Natural killer cell (primary cell): ENCODE measurements at regions of chr2 and their contacts with region 1.

Region 1: DNA sequence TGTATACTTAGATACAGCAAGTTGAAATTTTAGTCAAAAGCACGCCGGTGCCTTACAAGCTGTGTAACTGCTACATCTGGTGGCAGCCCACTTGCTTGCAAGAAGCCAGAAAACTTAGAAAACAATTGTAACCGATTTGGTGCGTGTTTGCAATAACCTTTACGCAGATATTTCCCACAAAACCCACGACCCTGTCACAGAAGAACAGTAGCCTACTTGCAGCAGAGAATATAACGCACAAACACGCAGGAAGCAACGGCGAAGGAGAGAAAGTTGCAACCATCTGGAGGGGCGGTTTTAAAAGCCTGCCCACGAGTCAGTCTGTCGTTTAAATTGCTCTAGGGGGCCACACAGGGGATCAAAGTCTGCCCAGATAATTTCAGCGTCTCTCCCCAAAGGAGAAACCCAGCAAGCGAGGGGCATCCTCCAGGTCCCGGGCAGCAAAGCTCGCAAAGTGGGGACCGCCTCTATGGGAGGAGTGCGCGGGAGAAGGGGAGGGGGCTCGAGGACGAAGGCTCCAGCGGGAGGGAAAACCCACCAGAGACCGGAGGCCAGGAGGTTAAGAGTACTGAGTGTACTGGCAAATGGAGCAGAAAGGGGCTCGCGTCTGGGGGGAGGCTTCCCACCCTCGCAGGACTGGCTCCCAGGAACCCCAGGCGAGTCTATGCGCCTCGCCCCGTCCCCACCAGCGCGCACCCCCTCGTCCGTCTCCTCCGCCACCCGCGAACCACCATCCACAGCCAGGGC is 1.1 kb downstream of the TLK1 start:
- DNase-seq: peak; percentile 47 to 86
- ATAC-seq: peak; percentile 28 to 46 (median 33)
- H3K4me3 ChIP-seq: peak overlapping the region; percentile 74
- H3K4me3 Mint-ChIP-seq: peak overlapping the region; percentile 98
- H3K27ac ChIP-seq: peak overlapping the region; percentile 90
- H3K27ac Mint-ChIP-seq: peak overlapping the region; percentile 87 to 96
- H3K4me1 ChIP-seq: peaks cover 3% of the 10 kb centered on the region
- H3K4me1 Mint-ChIP-seq: peaks cover 48 to 50% of the 10 kb centered on the region in 2 donors
- H3K27me3 ChIP-seq: no peaks in the 10 kb centered on the region
- H3K27me3 Mint-ChIP-seq: no peaks in the 10 kb centered on the region
- CTCF ChIP-seq: peak; percentile 50

Region 2: GRCh38 chr2:171136024-171136423 is 23.5 kb before region 1 on chr2:
- intact Hi-C with region 1: no loop called
- DNase-seq: no peak
- ATAC-seq: no peak
- H3K4me3 ChIP-seq: no peak overlapping the region
- H3K4me3 Mint-ChIP-seq: no peak overlapping the region
- H3K27ac ChIP-seq: no peak overlapping the region
- H3K27ac Mint-ChIP-seq: peak overlapping the region; percentile 10 to 19
- H3K4me1 ChIP-seq: no peaks in the 10 kb centered on the region
- H3K4me1 Mint-ChIP-seq: peaks cover 52 to 58% of the 10 kb centered on the region in 2 donors
- H3K27me3 ChIP-seq: no peaks in the 10 kb centered on the region
- H3K27me3 Mint-ChIP-seq: no peaks in the 10 kb centered on the region
- CTCF ChIP-seq: no peak

Region 3: DNA sequence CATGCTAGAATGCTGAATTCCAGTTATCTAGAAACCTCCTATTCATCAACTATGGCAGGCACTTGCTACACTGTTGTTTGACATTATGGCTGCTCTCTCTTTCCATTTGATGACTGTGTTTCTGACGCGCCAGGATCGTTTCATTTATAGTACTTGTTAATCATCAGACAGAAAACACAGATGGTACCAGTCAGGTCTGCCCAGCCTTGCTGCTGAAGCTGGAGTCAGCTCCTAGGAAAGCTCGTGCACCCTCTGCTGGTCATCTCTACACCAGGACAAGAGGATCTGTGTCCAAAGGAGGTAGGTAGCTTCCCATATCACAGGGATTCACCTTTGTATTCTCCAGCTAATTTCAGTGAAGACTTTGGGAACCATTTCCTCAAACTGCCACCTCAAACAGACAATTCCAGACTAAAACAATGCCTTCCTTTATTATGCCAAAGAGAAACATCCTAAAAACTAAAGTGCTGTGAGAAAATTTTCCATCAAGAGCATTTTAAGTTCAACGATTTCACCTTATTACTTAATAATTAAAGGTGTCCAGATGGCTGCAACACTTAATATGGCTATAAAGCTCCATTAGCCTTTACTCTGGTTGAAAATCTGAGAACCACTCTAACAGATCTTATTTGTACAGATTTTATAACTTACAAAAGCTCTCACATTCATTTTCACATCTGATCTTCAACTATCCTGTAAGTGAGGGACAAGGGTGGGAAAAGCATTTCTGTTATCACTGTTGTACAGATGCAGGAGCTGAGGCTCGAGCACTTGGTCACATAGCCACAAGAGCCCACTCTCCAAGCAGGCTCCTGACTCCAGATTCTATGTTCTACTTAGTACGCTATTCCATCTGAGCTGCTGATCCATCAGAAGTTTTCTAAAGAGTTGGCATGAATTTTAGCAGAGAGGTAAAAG is 256.7 kb after region 1 on chr2:
- intact Hi-C with region 1: loop called (anchors 10 kb)
- DNase-seq: peak; percentile 45 to 88
- ATAC-seq: peak; percentile 88 to 99 (median 98)
- H3K4me3 ChIP-seq: no peak overlapping the region
- H3K4me3 Mint-ChIP-seq: no peak overlapping the region
- H3K27ac ChIP-seq: no peak overlapping the region
- H3K27ac Mint-ChIP-seq: peak overlapping the region in 1 of 2 donors; percentile 6
- H3K4me1 ChIP-seq: no peaks in the 10 kb centered on the region
- H3K4me1 Mint-ChIP-seq: peaks cover 6 to 14% of the 10 kb centered on the region in 2 donors
- H3K27me3 ChIP-seq: no peaks in the 10 kb centered on the region
- H3K27me3 Mint-ChIP-seq: no peaks in the 10 kb centered on the region
- CTCF ChIP-seq: peak; percentile 70